Activated CD8-positive, alpha-beta T cell treated with anti-CD3 and anti-CD28 coated beads for 36 hours (primary cell): ENCODE measurements at regions of chr3 and their contacts with region 1.

Region 1: DNA sequence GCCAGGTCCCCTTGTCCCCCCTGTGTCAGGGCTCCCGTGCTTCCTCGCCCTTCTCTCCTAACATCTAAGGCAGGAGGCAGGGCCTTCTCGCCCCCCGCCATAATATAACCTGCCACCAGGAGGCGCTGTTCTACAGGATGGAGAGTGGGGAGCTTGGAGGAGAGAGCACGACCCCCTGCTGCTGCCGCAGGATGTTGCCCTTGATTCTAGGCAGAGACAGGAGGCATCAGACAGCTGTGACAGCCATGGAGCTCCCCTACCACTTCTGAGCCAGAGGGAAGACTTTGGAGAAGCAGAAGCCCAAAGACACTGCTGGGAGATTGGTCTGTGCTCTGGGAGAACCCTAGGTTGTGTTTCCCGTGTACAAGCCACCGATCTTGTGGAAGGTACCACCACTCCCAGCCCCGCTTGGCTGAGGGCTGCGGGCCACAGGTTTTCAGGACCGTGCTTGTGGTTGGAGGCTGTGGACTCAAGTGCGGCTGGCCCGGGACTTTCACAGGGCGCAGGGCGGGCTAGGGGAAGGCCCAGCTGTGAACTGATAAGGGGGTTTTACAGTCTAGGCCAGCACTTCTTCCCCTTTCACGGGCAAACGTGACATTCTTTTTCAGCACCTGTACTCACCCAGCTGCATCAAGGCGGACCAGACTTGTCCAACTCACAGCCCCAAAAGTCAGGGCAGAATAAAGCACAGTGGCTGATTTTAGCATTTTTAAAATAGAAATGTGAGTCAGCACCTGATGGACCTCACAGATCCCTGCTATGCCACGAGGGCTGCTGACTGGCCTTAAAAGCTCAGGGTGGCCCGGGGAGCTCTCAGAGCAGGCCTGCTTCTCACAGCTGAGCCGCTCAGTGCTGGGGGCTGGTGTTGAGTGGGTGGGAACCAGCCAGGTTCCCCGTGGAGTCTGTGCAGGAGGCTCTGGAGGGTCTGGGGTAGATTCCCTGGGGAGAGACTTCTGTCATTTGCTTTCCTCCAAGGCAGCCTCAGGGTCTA is 2.6 kb upstream of the TIGIT start:
- DNase-seq: peak; percentile 95
- ATAC-seq: peak; percentile 79
- H3K4me3 Mint-ChIP-seq: peak overlapping the region; percentile 80
- H3K27ac Mint-ChIP-seq: peak overlapping the region; percentile 95
- H3K4me1 Mint-ChIP-seq: peaks cover 57% of the 10 kb centered on the region
- H3K27me3 Mint-ChIP-seq: no peaks in the 10 kb centered on the region
- CTCF ChIP-seq: peak; percentile 94

Region 2: GRCh38 chr3:114213627-114214541 is 77.3 kb before region 1 on chr3:
- CTCF ChIA-PET with region 1: interaction called, 26 read pairs
- POLR2A ChIA-PET with region 1: interaction called, 159 read pairs
- intact Hi-C with region 1: no loop called
- DNase-seq: peak; percentile 88
- ATAC-seq: peak; percentile 68
- H3K4me3 Mint-ChIP-seq: no peak overlapping the region
- H3K27ac Mint-ChIP-seq: no peak overlapping the region
- H3K4me1 Mint-ChIP-seq: peaks cover 21% of the 10 kb centered on the region
- H3K27me3 Mint-ChIP-seq: no peaks in the 10 kb centered on the region
- CTCF ChIP-seq: no peak

Region 3: DNA sequence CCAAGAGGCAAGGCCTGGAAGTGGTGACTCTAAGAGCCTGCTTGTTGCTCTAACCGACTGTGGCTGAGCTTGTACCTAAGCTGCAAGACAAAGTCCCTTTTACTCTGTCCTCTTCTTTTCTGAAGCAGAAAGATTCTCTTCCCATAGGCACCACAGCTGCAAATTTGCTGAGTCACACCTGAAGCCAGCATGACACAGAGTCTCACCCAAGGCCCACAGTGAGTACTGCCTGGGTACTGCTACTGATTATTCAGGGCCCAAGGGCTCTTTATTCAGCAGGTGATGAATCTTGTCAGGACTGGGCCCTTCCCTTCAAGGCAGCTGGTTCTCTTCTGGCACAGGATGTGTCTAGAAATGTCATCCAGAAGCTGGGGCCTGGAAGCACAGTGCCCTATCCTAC is 16.3 kb before region 1 on chr3:
- CTCF ChIA-PET with region 1: interaction called, 13 read pairs
- POLR2A ChIA-PET with region 1: interaction called, 3 read pairs
- intact Hi-C with region 1: no loop called
- DNase-seq: no peak
- ATAC-seq: peak; percentile 34
- H3K4me3 Mint-ChIP-seq: no peak overlapping the region
- H3K27ac Mint-ChIP-seq: peak overlapping the region; percentile 25
- H3K4me1 Mint-ChIP-seq: peaks cover 7% of the 10 kb centered on the region
- H3K27me3 Mint-ChIP-seq: no peaks in the 10 kb centered on the region
- CTCF ChIP-seq: no peak

Region 4: DNA sequence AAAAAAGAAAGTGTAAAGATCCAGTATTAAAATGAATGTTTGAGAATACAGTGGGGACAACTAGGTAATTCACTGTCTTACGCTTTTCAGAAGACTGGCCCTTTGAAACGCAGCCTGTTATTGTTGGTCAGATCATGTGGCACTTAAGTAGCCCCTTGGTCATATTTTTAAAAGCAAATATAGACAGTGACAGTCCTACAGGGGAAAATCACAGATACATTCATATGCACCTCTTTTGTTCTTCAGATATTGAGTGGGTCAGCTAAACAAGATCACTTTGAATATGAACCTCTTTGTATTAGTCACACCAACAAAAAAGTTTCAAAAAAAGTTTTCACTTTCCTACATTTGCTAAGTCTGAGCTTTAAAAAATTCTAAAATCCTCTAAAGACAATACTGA is 38.6 kb after region 1 on chr3:
- CTCF ChIA-PET with region 1: interaction called, 13 read pairs
- POLR2A ChIA-PET with region 1: interaction called, 10 read pairs
- intact Hi-C with region 1: loop called (anchors 5 kb)
- DNase-seq: no peak
- ATAC-seq: no peak
- H3K4me3 Mint-ChIP-seq: peak overlapping the region; percentile 12
- H3K27ac Mint-ChIP-seq: peak overlapping the region; percentile 98
- H3K4me1 Mint-ChIP-seq: peaks cover 86% of the 10 kb centered on the region
- H3K27me3 Mint-ChIP-seq: no peaks in the 10 kb centered on the region
- CTCF ChIP-seq: no peak

Region 5: DNA sequence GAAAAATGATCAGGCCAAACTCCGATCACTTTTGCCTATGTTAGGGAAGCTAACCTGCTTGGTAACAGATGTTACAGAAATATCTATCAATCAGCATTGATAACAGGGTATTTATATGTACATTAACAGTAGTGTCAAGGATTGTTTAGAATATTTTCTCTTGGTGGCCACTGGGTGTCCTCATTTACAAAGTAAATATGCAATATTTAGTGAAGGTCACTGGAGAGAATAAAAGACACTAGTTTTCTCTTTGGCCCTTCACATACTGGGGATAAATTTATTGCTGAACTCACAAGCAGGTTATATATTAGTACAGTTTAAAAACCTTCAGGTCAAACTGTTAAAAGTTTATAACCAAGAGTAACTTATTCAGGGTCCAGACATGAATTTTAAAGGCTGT is 71.6 kb after region 1 on chr3:
- CTCF ChIA-PET with region 1: interaction called, 14 read pairs
- POLR2A ChIA-PET with region 1: interaction called, 5 read pairs
- intact Hi-C with region 1: no loop called
- DNase-seq: no peak
- ATAC-seq: peak; percentile 74
- H3K4me3 Mint-ChIP-seq: no peak overlapping the region
- H3K27ac Mint-ChIP-seq: no peak overlapping the region
- H3K4me1 Mint-ChIP-seq: peaks cover 22% of the 10 kb centered on the region
- H3K27me3 Mint-ChIP-seq: no peaks in the 10 kb centered on the region
- CTCF ChIP-seq: peak; percentile 62

Region 6: GRCh38 chr3:114432310-114432709 is 141.1 kb after region 1 on chr3:
- CTCF ChIA-PET with region 1: no interaction called
- POLR2A ChIA-PET with region 1: no interaction called
- intact Hi-C with region 1: no loop called
- DNase-seq: no peak
- ATAC-seq: no peak
- H3K4me3 Mint-ChIP-seq: no peak overlapping the region
- H3K27ac Mint-ChIP-seq: no peak overlapping the region
- H3K4me1 Mint-ChIP-seq: no peaks in the 10 kb centered on the region
- H3K27me3 Mint-ChIP-seq: no peaks in the 10 kb centered on the region
- CTCF ChIP-seq: no peak

Region 7: GRCh38 chr3:114551770-114552526 is 260.7 kb after region 1 on chr3:
- CTCF ChIA-PET with region 1: no interaction called
- POLR2A ChIA-PET with region 1: no interaction called
- intact Hi-C with region 1: no loop called
- DNase-seq: no peak
- ATAC-seq: no peak
- H3K4me3 Mint-ChIP-seq: no peak overlapping the region
- H3K27ac Mint-ChIP-seq: no peak overlapping the region
- H3K4me1 Mint-ChIP-seq: no peaks in the 10 kb centered on the region
- H3K27me3 Mint-ChIP-seq: no peaks in the 10 kb centered on the region
- CTCF ChIP-seq: no peak